HAP-1 (cell line): ENCODE measurements at regions of chr1 and their contacts with region 1.

Region 1: DNA sequence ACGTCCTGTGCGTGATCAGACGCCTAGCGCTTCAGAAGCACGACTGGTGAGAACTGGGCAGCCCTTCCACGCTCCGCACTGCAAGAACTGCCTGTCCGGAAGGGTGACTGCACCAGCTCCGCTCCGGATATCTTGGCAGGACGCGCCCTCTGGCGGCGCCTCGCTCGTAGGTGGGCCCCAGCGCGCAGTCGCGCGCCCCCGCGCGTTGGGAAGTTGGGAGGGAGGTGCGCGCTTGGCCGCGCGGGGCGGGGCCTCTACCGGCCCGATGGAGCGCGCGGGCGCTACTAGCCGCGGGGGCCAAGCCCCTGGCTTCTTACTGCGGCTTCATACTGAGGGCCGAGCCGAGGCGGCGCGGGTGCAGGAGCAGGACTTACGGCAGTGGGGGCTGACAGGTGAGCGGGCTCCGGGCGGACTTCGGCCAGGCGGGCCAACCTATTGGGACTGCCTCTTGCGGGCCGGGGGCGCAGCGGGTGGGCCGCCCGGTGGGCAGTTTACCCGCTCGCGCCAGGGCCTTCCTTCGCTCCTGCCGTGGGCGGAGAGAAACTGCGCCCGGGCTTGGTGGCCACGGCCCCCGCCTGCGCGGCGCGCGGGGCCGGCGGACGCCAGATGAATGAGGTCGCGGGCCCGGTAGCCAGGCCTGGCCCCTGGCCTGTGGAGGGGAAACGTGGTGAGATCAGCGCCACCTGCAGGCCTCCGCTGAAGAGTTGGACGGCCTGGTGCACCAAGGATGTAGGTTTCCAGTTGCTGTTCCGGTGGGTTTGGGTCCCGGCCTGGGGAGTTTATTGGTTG is at the start of gene CHD1L:
- DNase-seq: peak; percentile 90 to 95
- H3K4me3 ChIP-seq: peak within 1 kb of the TSS; percentile 93
- H3K4me1 ChIP-seq: peaks cover 13% of the 10 kb centered on the region
- H3K27me3 ChIP-seq: no peaks in the 10 kb centered on the region

Region 2: GRCh38 chr1:147172168-147172992 is 70.3 kb before region 1 on chr1 and contains the start of gene PRKAB2:
- in situ Hi-C with region 1: loop called (anchors 5 kb)
- DNase-seq: peak; percentile 92 to 93
- H3K4me3 ChIP-seq: peak within 1 kb of the TSS; percentile 93
- H3K4me1 ChIP-seq: peaks cover 30% of the 10 kb centered on the region
- H3K27me3 ChIP-seq: no peaks in the 10 kb centered on the region

Region 3: GRCh38 chr1:147868953-147869352 is 626.3 kb after region 1 on chr1:
- in situ Hi-C with region 1: no loop called
- DNase-seq: no peak
- H3K4me3 ChIP-seq: no peak overlapping the region
- H3K4me1 ChIP-seq: no peaks in the 10 kb centered on the region
- H3K27me3 ChIP-seq: 0 out of 2 replicates have a peak, but pooled peaks cover 4% of the 10 kb centered on the region